Common myeloid progenitor, CD34-positive (primary cell): ENCODE measurements at regions of chr19 and their contacts with region 1.

Region 1: DNA sequence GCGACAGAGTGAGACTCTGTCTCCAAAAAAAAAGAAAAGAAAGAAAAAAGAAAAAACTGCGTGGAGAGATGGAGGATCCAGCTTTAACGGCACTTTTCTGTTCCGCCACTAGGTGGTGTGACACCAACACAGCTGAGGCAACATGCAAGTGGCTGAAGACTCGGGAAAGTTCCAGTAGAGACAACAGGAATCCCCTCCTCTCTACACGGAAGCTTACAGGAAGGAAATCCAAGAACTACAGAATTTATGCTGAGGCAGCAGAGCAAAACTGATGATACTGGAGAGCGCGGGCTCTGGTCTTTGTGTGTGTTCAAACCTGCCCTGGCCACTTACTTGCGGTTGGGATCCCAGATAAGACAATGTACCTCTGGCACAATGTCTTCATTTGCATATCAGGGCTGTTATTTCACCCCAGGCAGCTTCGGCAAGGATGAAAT is 9.9 kb downstream of the RANBP3 start:
- DNase-seq: peak; percentile 64 to 76 (median 70)
- H3K4me3 ChIP-seq: peak overlapping the region in 2 of 7 experiments; percentile 6 to 24
- H3K27ac ChIP-seq: peak overlapping the region in 1 of 2 experiments; percentile 35
- H3K4me1 ChIP-seq: peaks cover 2 to 53% (median 38%) of the 10 kb centered on the region in 4 experiments
- H3K27me3 ChIP-seq: no peaks in the 10 kb centered on the region

Region 2: GRCh38 chr19:5953680-5954213 is 14.3 kb before region 1 on chr19:
- CTCF ChIA-PET with region 1: interaction called, 20 read pairs
- POLR2A ChIA-PET with region 1: no interaction called
- DNase-seq: peak; percentile 47 to 86 (median 79)
- H3K4me3 ChIP-seq: peak overlapping the region in 3 of 7 experiments; percentile 33 to 60 (median 44)
- H3K27ac ChIP-seq: peak overlapping the region; percentile 43 to 67
- H3K4me1 ChIP-seq: peaks cover 9 to 67% (median 46%) of the 10 kb centered on the region in 4 experiments
- H3K27me3 ChIP-seq: no peaks in the 10 kb centered on the region

Region 3: DNA sequence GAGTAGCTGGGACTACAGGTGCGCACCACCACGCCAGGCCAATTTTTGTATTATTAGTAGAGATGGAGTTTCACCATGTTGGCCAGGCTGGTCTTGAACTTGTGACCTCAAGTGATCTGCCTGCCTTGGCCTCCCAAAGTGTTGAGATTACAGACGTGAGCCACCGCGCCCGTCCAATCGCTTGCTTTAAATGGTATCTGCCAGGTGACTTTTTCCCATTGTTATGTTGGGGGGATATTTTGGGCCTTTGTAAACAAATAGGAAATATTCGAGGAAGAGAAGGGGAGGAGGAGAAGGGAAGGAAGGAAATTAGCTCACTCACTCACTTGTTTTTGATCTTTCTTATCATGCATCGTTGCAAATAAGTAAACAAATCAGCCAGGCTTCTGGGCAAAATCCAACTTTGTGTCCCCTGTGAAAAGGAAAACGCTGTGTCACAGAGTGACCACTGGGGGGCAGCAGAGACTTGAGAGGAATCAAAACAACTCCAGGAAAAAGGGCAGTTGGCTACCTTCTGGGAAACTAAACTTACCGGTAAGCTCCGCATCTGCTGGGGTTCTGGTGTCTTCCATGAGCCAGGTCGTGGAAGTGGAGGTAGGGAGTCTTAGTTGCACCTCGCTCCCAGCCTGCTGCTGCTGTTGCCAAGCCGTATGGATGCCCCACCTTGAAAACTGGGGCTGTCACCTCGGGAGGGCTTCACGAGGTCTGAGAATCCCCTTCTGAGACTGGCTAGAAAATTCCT is 19.2 kb after region 1 on chr19:
- CTCF ChIA-PET with region 1: interaction called, 19 read pairs
- POLR2A ChIA-PET with region 1: interaction called, 4 read pairs
- DNase-seq: peak; percentile 72 to 82 (median 74)
- H3K4me3 ChIP-seq: peak overlapping the region; percentile 27 to 89 (median 60)
- H3K27ac ChIP-seq: peak overlapping the region in 1 of 2 experiments; percentile 40
- H3K4me1 ChIP-seq: peaks cover 0 to 25% (median 16%) of the 10 kb centered on the region in 4 experiments
- H3K27me3 ChIP-seq: no peaks in the 10 kb centered on the region

Region 4: GRCh38 chr19:6076675-6077463 is 108.9 kb after region 1 on chr19:
- CTCF ChIA-PET with region 1: no interaction called
- POLR2A ChIA-PET with region 1: no interaction called
- DNase-seq: no peak
- H3K4me3 ChIP-seq: no peak overlapping the region
- H3K27ac ChIP-seq: no peak overlapping the region
- H3K4me1 ChIP-seq: peaks cover 0 to 8% (median 1%) of the 10 kb centered on the region in 4 experiments
- H3K27me3 ChIP-seq: no peaks in the 10 kb centered on the region

Region 5: DNA sequence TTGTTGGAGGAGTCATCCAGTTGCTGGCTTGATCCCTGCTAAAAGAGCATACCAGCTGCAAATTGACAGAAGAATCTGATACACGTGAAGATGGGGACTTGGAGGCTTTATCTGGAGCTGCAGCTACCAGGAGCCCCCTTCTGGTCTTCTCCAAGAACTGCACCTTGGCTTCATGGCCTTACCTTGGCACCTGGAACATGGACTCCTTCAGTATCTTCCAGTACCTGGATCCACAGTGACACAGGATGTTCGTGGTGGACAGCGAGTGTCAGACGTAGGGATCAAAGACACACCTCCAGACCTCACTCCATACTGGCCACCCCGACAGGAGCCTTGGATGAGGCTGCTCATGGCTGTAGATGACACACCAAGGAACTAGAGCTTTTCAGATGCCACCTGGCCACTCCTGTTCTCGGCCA is 157.6 kb after region 1 on chr19:
- CTCF ChIA-PET with region 1: no interaction called
- POLR2A ChIA-PET with region 1: no interaction called
- DNase-seq: peak; percentile 72 to 82 (median 80)
- H3K4me3 ChIP-seq: no peak overlapping the region
- H3K27ac ChIP-seq: no peak overlapping the region
- H3K4me1 ChIP-seq: peaks cover 0 to 5% (median 0%) of the 10 kb centered on the region in 4 experiments
- H3K27me3 ChIP-seq: no peaks in the 10 kb centered on the region